ENCODE measurements at regions of chr11 and their contacts with region 1.

Region 1: DNA sequence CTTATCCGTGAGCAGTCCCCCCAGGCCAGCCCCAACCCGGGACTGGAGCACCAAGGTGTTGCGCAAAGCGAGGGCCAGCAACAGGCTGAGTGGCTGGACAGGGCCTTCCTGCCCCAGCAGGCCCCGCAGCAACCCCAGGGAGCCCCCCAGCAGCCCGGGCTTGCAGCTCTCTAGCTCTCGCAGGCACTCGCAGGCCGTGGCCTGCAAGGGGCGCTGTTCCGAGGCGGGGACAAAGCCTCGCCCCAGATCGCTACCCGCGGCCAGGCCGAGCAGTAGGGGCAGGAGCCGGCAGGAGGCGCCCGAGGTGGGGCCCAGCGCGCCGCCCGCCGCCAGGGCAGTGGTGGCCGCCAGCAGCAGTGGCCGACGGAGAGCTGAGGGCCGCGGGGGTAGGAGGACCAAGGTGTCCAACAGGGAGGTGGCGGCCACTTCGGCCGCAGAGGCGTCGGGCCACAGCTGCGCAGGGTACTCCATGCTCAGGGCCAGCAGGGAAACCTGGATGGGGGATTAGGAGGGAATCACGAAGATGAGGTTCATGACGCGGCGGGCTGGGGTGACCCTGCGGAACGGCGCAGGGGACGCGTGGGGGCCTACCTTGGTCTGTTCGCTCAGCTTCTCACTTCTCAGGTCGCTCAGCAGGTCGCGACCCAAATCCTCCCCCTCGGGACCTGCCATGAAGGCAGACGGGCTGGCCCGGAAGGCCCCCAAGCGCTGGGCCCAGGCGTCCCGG is 762 bp downstream of the AP5B1 start:
- DNase-seq: peak; percentile 72 to 92 (median 80)
- ATAC-seq: peak; percentile 47 to 92 (median 86)
- H3K4me3 ChIP-seq: peak overlapping the region; percentile 67 to 98 (median 87)
- H3K27ac ChIP-seq: peak overlapping the region in 11 of 12 donors; percentile 52 to 86 (median 73)
- H3K4me1 ChIP-seq: peaks cover 0 to 54% (median 12%) of the 10 kb centered on the region in 12 donors
- H3K27me3 ChIP-seq: peaks cover 0 to 6% (median 2%) of the 10 kb centered on the region in 9 donors
- CTCF ChIP-seq: peak; percentile 80 to 97 (median 93)
- POLR2A ChIP-seq: no peak

Region 2: GRCh38 chr11:65314501-65315203 is 465.4 kb before region 1 on chr11 and contains the start of gene CDC42EP2:
- intact Hi-C with region 1: no loop called
- DNase-seq: peak; percentile 90 to 95 (median 92)
- ATAC-seq: peak; percentile 70 to 95 (median 86)
- H3K4me3 ChIP-seq: peak within 1 kb of the TSS; percentile 80 to 99 (median 92)
- H3K27ac ChIP-seq: peak within 1 kb of the TSS; percentile 85 to 99 (median 94)
- H3K4me1 ChIP-seq: peaks cover 3 to 67% (median 43%) of the 10 kb centered on the region in 12 donors
- H3K27me3 ChIP-seq: no peaks in the 10 kb centered on the region
- CTCF ChIP-seq: peak in 2 of 12 donors; percentile 5 to 15
- POLR2A ChIP-seq: peak; percentile 33 to 88
- total RNA-seq, gene CDC42EP2: 3.3 to 25.0 (median 8.9) TPM

Region 3: DNA sequence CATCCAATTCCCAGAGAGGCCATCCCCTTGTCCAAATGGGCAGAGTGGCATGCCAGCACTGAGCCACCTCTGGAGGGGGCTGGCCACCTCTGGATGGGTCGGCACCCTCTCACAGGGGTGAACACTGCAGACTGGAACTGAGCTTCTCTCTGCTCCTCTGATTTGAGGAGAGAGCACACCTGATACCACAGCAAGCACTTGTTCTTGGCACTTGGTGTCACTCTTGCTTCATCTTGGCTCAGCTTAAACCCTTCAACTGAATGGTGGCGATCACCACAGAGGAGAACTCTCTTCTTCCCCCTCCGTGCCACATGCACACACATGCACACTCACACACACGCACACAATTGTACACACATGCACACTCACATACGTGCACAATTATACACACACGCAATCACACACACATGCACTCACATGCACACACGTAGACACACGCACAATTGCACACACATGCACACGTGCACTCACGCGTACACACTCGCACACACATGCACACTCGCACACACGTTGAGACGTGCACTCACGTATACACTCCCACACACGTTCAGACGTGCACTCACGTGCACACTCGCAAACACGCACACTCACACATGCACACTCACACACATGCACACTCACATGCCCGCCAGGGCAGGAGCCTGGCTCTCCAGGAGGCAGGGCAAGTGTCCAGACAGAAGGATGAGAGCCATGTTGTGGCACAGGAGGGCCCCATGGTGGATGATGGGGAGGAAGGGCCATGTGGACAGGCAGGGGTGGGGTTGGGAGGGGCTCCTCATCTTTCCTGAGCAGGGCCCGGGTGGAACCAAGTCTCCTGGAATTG is 30.2 kb after region 1 on chr11:
- intact Hi-C with region 1: loop called in 3 of 10 experiments (anchors 5 kb)
- DNase-seq: no peak
- ATAC-seq: peak in 1 of 4 donors; percentile 42
- H3K4me3 ChIP-seq: no peak overlapping the region
- H3K27ac ChIP-seq: no peak overlapping the region
- H3K4me1 ChIP-seq: peaks cover 0 to 23% (median 0%) of the 10 kb centered on the region in 12 donors
- H3K27me3 ChIP-seq: peaks cover 0 to 23% (median 6%) of the 10 kb centered on the region in 9 donors
- CTCF ChIP-seq: no peak
- POLR2A ChIP-seq: no peak

Region 4: DNA sequence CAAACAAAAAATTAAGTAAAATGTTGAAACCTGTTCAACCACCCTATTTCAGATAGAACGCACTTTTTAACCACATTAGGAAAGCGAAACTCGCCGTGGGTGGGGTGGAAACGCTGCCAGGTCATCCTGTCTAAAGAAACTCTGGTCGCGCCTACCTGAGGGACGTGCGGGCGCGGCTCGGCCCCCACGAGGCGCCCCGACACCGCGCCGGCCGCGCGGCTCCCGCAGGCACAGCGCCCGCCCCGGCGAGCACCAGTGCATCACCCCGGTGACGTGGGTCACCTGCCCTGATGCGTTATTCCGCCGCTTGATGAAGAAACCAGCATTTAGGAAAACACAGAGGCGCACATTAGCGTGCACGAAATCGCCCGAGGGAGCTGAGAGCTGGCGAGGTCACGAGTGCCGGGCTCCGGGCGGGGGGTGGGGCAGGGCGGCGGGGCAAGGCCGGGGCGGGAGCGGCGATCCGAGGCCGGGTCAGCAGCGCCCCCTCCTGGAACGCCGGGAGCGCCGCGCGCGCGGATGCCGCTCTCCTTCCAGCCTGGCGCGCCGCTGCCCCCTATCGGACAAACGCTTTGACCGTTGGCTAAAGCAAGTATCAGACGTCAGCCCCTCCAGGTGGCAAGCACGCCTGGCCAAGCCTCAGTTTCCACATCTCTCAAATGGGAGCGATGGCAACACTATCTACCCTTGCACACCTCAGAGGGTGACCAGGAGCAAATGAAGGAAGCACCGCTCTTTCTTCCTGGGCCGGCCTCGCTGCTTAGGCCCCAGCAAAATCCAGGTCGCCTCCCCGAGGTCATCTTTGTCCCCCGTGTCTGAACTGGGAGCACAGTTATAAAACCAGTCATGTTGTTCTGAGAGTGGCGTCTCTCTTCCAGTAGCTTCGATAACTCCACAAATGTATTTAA is 38.1 kb after region 1 on chr11:
- intact Hi-C with region 1: loop called (anchors 1 to 5 kb)
- DNase-seq: peak; percentile 92 to 97 (median 94)
- ATAC-seq: peak; percentile 62 to 98 (median 96)
- H3K4me3 ChIP-seq: peak overlapping the region; percentile 31 to 83 (median 67)
- H3K27ac ChIP-seq: peak overlapping the region in 11 of 12 donors; percentile 33 to 86 (median 62)
- H3K4me1 ChIP-seq: peaks cover 0 to 25% (median 5%) of the 10 kb centered on the region in 12 donors
- H3K27me3 ChIP-seq: no peaks in the 10 kb centered on the region
- CTCF ChIP-seq: peak in 11 of 12 donors; percentile 98 to 100 (median 100)
- POLR2A ChIP-seq: no peak

Region 5: DNA sequence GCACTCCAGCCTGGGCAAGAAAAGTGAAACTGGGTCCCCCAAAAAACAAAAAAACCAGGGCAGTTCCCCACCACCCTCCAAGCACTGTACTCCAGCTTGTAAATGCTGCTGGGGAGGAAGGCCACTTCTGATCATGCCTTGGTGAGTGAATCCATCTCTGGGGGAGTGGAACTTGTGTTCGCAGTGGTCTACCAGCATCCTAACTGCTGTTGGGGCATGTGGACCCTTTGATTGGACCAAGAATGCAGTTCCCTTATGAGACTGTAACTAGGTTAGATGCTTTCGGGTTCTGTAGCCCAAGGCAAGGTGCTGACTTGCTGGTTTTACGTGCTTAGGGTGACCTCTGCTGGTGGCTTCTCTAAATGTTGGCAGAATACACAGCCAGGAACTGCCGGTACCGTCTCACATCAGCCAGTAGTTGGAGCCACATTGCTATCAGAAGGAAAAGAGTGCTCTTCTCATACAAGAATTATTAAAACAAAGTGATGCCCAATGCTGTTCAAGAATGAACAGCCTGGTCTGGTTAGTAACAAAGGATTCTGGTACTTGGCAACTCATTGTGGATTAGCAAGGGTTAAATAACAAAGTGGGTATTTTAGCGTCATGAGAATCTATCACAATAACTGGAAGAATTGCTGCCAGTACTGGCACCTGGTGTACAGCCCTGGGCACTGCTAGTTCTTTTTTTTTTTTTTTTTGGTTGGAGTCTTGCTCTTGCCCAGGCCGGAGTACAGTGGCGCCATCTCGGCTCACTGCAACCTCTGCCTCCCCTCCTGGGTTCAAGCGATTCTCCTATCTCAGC is 209.0 kb after region 1 on chr11:
- intact Hi-C with region 1: loop called in 4 of 10 experiments (anchors 2 to 5 kb)
- DNase-seq: peak in 4 of 5 donors; percentile 86 to 89 (median 88)
- ATAC-seq: peak; percentile 95 to 98 (median 98)
- H3K4me3 ChIP-seq: no peak overlapping the region
- H3K27ac ChIP-seq: peak overlapping the region in 1 of 12 donors; percentile 43
- H3K4me1 ChIP-seq: peaks cover 0 to 6% (median 0%) of the 10 kb centered on the region in 12 donors
- H3K27me3 ChIP-seq: no peaks in the 10 kb centered on the region
- CTCF ChIP-seq: peak; percentile 85 to 98 (median 92)
- POLR2A ChIP-seq: no peak

Measured in heart left ventricle (tissue), 16 donors.